Ovary (tissue), 10 donors: ENCODE measurements at regions of chr11 and their contacts with region 1.

Region 1: GRCh38 chr11:113643006-113643585 is 63.0 kb downstream of the TMPRSS5 start:
- DNase-seq: no peak
- H3K4me3 ChIP-seq: no peak overlapping the region
- H3K27ac ChIP-seq: no peak overlapping the region
- H3K4me1 ChIP-seq: no peaks in the 10 kb centered on the region
- H3K27me3 ChIP-seq: no peaks in the 10 kb centered on the region
- CTCF ChIP-seq: no peak
- EP300 ChIP-seq: no peak
- POLR2A ChIP-seq: no peak

Region 2: GRCh38 chr11:113615773-113616172 is 27.3 kb before region 1 on chr11:
- intact Hi-C with region 1: loop called in 1 of 4 experiments (anchors 1 kb)
- DNase-seq: no peak
- H3K4me3 ChIP-seq: no peak overlapping the region
- H3K27ac ChIP-seq: no peak overlapping the region
- H3K4me1 ChIP-seq: no peaks in the 10 kb centered on the region
- H3K27me3 ChIP-seq: no peaks in the 10 kb centered on the region
- CTCF ChIP-seq: no peak
- EP300 ChIP-seq: no peak
- POLR2A ChIP-seq: no peak

Region 3: GRCh38 chr11:113806406-113806805 is 163.3 kb after region 1 on chr11:
- intact Hi-C with region 1: no loop called
- DNase-seq: no peak
- H3K4me3 ChIP-seq: no peak overlapping the region
- H3K27ac ChIP-seq: no peak overlapping the region
- H3K4me1 ChIP-seq: no peaks in the 10 kb centered on the region
- H3K27me3 ChIP-seq: no peaks in the 10 kb centered on the region
- CTCF ChIP-seq: no peak
- EP300 ChIP-seq: no peak
- POLR2A ChIP-seq: no peak

Region 4: DNA sequence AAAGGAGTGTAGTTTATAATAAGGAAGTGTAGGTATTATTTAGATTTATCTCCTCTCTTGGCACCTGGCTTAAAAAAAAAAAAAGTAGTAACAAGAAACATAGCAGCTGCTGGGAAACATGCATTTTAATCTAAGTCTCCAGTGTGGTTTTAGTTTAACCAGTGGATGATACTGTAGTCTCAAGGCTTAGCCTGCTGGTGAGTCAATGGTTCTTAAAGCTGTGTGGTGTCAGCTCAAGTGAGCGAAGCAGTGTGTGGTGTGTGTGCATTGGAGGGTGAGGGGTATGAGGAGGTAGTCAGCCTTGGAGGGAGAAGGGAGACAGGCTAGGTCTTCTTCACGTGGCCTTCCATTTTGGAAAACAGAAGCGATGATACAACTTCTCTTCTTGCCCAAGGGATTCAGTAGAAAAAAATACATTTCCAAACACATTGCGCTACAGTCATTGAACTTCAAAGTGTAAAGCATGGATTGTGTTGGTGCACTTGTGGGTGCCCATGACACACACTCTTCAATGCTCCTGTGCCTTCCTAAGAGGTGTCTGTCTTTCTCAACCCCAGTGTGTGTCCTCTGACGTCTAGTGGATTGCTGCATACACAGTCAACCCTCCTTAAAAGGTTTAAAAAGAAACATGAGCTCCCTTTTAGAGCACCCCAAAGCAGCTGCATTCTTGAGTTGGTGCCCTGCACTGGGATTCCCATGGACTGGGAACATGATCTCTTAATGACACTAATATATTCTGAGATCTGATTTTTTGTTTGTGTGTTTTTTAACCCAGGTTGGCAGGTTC is 456.5 kb after region 1 on chr11:
- intact Hi-C with region 1: no loop called
- DNase-seq: no peak
- H3K4me3 ChIP-seq: no peak overlapping the region
- H3K27ac ChIP-seq: no peak overlapping the region
- H3K4me1 ChIP-seq: peaks cover 6% of the 10 kb centered on the region
- H3K27me3 ChIP-seq: no peaks in the 10 kb centered on the region
- CTCF ChIP-seq: no peak
- EP300 ChIP-seq: no peak
- POLR2A ChIP-seq: no peak